ENCODE measurements at regions of chr5 and their contacts with region 1.

Region 1: GRCh38 chr5:32785611-32786216 is 74.6 kb downstream of the NPR3 start:
- DNase-seq: no peak
- ATAC-seq: no peak
- H3K4me3 ChIP-seq: no peak overlapping the region
- H3K4me3 Mint-ChIP-seq: no peak overlapping the region
- H3K27ac ChIP-seq: no peak overlapping the region
- H3K27ac Mint-ChIP-seq: no peak overlapping the region
- H3K4me1 ChIP-seq: no peaks in the 10 kb centered on the region
- H3K4me1 Mint-ChIP-seq: no peaks in the 10 kb centered on the region
- H3K27me3 ChIP-seq: no peaks in the 10 kb centered on the region
- H3K27me3 Mint-ChIP-seq: peaks cover 0 to 14% of the 10 kb centered on the region in 2 donors

Region 2: GRCh38 chr5:31192442-31192841 is 1593.3 kb before region 1 on chr5:
- CTCF ChIA-PET with region 1: no interaction called
- POLR2A ChIA-PET with region 1: interaction called in 1 of 2 experiments, 10 read pairs
- DNase-seq: no peak
- ATAC-seq: no peak
- H3K4me3 ChIP-seq: no peak overlapping the region
- H3K4me3 Mint-ChIP-seq: no peak overlapping the region
- H3K27ac ChIP-seq: no peak overlapping the region
- H3K27ac Mint-ChIP-seq: no peak overlapping the region
- H3K4me1 ChIP-seq: no peaks in the 10 kb centered on the region
- H3K4me1 Mint-ChIP-seq: peaks cover 0 to 14% (median 8%) of the 10 kb centered on the region in 3 donors
- H3K27me3 ChIP-seq: peaks cover 22 to 26% of the 10 kb centered on the region in 2 experiments
- H3K27me3 Mint-ChIP-seq: peaks cover 49 to 50% of the 10 kb centered on the region in 2 donors

Region 3: GRCh38 chr5:32707418-32707997 is 78.2 kb before region 1 on chr5:
- CTCF ChIA-PET with region 1: no interaction called
- POLR2A ChIA-PET with region 1: interaction called in 1 of 2 experiments, 11 read pairs
- DNase-seq: no peak
- ATAC-seq: no peak
- H3K4me3 ChIP-seq: no peak overlapping the region
- H3K4me3 Mint-ChIP-seq: no peak overlapping the region
- H3K27ac ChIP-seq: no peak overlapping the region
- H3K27ac Mint-ChIP-seq: no peak overlapping the region
- H3K4me1 ChIP-seq: peaks cover 2 to 17% of the 10 kb centered on the region in 2 experiments
- H3K4me1 Mint-ChIP-seq: peaks cover 24 to 29% (median 25%) of the 10 kb centered on the region in 3 donors
- H3K27me3 ChIP-seq: peaks cover 2 to 40% of the 10 kb centered on the region in 2 experiments
- H3K27me3 Mint-ChIP-seq: peaks cover 30 to 58% of the 10 kb centered on the region in 2 donors

Region 4: GRCh38 chr5:32802764-32803163 is 17.1 kb after region 1 on chr5:
- CTCF ChIA-PET with region 1: no interaction called
- POLR2A ChIA-PET with region 1: no interaction called
- DNase-seq: no peak
- ATAC-seq: no peak
- H3K4me3 ChIP-seq: no peak overlapping the region
- H3K4me3 Mint-ChIP-seq: no peak overlapping the region
- H3K27ac ChIP-seq: no peak overlapping the region
- H3K27ac Mint-ChIP-seq: no peak overlapping the region
- H3K4me1 ChIP-seq: no peaks in the 10 kb centered on the region
- H3K4me1 Mint-ChIP-seq: no peaks in the 10 kb centered on the region
- H3K27me3 ChIP-seq: no peaks in the 10 kb centered on the region
- H3K27me3 Mint-ChIP-seq: no peaks in the 10 kb centered on the region

Measured in T-cell (primary cell).